OCI-LY7 (cell line): ENCODE measurements at regions of chr12 and their contacts with region 1.

Region 1: GRCh38 chr12:55060470-55060869 is 40.7 kb downstream of the NEUROD4 start:
- DNase-seq: peak; percentile 23
- H3K4me3 ChIP-seq: no peak overlapping the region
- H3K27ac ChIP-seq: no peak overlapping the region
- H3K4me1 ChIP-seq: peaks cover 9% of the 10 kb centered on the region
- CTCF ChIP-seq: no peak

Region 2: GRCh38 chr12:55043542-55043941 is 16.9 kb before region 1 on chr12:
- CTCF ChIA-PET with region 1: no interaction called
- POLR2A ChIA-PET with region 1: interaction called, 12 read pairs
- intact Hi-C with region 1: no loop called
- DNase-seq: no peak
- H3K4me3 ChIP-seq: no peak overlapping the region
- H3K27ac ChIP-seq: no peak overlapping the region
- H3K4me1 ChIP-seq: no peaks in the 10 kb centered on the region
- CTCF ChIP-seq: no peak